CD4-positive, alpha-beta T cell (primary cell): ENCODE measurements at regions of chr5 and their contacts with region 1.

Region 1: DNA sequence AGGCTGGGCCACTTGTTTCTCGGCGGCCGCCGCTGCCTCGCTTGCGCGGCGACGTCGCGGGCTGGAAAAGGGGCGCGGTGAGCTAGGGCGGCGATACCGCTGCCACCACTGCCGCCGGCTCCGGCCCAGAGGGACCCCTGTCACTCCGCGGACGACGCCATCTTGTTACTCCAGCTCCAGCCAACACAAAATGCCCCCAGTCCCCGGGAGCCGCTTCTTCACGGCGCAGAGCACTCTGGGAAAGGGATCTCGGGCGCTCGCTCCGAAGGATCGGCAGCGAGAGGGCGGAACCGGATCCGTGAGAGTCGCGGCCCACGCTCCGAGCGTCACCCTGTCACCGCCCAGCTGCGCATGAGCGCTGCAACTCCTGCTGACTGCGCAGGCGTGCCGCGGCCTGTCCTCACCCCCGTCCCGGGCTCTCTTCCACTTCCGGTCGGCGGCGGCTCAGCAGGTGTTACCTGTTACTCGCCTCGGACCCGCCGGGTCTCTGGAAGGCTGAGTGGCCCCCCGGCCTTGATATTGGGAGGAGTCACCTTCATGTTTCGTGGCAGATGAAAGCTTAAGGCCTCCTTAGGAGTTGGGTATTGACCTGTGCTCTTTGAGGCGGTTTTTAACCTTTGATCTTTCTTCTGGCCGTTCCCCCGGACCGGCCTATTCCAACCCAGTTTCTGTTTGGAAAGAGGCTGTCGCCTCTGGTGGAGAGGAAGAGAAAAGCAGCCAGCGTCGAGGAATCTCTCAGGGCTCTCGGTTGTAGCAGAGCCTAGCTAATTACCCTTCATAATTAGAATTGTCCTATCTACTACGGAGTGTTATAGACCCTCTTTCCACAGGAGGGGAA is at the start of gene CSNK1A1:
- DNase-seq: peak; percentile 97 to 100 (median 99)
- ATAC-seq: peak; percentile 86
- H3K4me3 ChIP-seq: peak within 1 kb of the TSS; percentile 97
- H3K4me3 Mint-ChIP-seq: peak within 1 kb of the TSS; percentile 99
- H3K27ac ChIP-seq: peak within 1 kb of the TSS; percentile 94 to 98
- H3K27ac Mint-ChIP-seq: peak within 1 kb of the TSS; percentile 98
- H3K4me1 ChIP-seq: peaks cover 26% of the 10 kb centered on the region
- H3K4me1 Mint-ChIP-seq: peaks cover 36% of the 10 kb centered on the region
- H3K27me3 ChIP-seq: no peaks in the 10 kb centered on the region
- H3K27me3 Mint-ChIP-seq: no peaks in the 10 kb centered on the region
- CTCF ChIP-seq: peak; percentile 67
- total RNA-seq, gene CSNK1A1: 201 to 217 TPM

Region 2: DNA sequence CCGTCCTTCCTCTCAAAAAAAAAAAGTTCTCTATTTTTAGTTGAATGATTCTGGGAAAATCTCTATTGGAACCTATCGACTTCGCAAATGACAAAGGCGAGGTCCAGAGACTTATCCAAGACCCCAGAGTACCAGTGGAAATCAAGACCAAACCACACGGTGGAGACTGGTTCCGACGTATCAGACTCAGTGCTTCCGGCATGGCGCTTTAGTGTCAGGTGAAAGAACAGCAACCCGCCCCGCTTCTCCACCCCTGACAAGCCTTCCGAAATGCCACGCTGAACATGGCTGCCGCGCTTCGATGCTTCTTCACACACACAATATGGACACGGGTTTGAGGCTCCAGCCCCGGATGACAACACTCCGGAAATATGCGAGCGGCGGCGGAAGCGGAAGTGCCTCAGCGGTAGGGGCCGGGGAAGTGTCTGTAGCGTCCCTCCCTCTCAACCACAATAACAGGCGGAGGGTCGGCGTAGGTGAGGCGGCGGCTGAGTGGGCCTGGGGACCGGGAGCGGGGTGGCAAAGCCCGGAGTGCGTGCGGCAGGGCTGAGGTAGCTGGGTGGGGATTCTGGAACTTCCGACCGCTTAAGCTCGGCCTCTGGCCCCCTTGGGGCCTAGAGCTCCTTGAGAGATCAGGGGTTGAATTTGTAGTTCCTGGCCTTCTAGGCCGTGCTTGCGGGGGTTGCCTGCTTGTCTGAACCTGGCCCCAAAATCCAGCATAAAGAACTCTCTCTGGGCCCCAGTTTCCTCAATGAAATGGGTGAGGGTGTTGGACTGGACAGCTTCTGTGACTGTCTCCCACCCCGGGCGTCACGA is 1167.6 kb before region 1 on chr5 and contains the start of gene FBXO38:
- CTCF ChIA-PET with region 1: no interaction called
- POLR2A ChIA-PET with region 1: interaction called, 3 read pairs
- intact Hi-C with region 1: loop called in 1 of 2 experiments (anchors 10 kb)
- DNase-seq: peak; percentile 93 to 99 (median 97)
- ATAC-seq: peak; percentile 94
- H3K4me3 ChIP-seq: peak within 1 kb of the TSS; percentile 84
- H3K4me3 Mint-ChIP-seq: peak within 1 kb of the TSS; percentile 89
- H3K27ac ChIP-seq: peak within 1 kb of the TSS; percentile 92 to 96
- H3K27ac Mint-ChIP-seq: peak within 1 kb of the TSS; percentile 96
- H3K4me1 ChIP-seq: peaks cover 25% of the 10 kb centered on the region
- H3K4me1 Mint-ChIP-seq: peaks cover 71% of the 10 kb centered on the region
- H3K27me3 ChIP-seq: no peaks in the 10 kb centered on the region
- H3K27me3 Mint-ChIP-seq: no peaks in the 10 kb centered on the region
- CTCF ChIP-seq: no peak
- total RNA-seq, gene FBXO38: 45.7 to 47.3 TPM

Region 3: DNA sequence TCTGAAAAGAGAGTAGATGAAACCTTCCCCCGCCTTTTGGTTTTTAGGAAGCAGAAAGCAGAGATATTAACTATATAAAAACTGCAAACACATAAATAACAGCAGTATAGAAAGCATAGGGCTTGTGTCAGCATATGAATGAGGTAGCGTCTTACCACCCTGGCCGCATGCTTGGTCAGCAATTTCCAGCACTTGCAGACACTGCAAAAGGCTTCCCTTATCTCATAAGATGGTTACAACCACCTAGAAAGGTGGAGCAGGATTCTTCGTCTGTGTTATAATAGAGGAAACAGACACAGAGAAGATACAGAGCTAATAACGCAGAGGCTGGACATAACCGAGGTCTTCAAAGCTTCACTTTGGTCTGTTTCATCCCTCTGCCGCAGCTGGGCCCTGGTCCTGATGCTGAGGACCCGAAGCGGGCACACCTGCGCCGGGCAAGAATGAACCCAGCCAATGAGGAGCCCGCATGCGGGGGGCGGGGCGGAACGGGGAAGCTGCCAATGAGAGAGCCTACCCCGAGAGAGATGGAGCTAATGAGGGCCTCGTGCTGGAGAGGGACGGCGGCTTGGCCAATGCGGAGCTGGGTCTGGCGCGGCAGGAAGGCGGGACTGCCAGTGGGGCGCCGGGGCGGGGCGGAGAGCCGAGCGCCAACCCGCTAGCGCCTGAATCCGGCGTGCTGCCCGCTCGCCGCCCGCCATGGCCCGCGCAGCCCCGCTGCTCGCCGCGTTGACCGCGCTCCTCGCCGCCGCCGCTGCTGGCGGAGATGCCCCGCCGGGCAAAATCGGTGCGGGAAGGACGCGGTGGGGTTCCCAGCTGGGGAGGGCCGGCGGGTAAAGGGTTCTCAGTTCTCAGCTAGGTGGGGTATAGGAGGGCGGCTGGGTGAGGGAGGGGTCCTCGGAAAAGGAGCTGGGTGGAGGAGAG is 193.8 kb before region 1 on chr5 and contains the start of gene PCYOX1L:
- CTCF ChIA-PET with region 1: interaction called, 3 read pairs
- POLR2A ChIA-PET with region 1: interaction called, 22 read pairs
- intact Hi-C with region 1: loop called in 1 of 2 experiments (anchors 5 kb)
- DNase-seq: peak; percentile 85 to 98 (median 96)
- ATAC-seq: peak; percentile 96
- H3K4me3 ChIP-seq: peak within 1 kb of the TSS; percentile 67
- H3K4me3 Mint-ChIP-seq: peak within 1 kb of the TSS; percentile 94
- H3K27ac ChIP-seq: peak within 1 kb of the TSS; percentile 67 to 82
- H3K27ac Mint-ChIP-seq: peak within 1 kb of the TSS; percentile 91
- H3K4me1 ChIP-seq: peaks cover 47% of the 10 kb centered on the region
- H3K4me1 Mint-ChIP-seq: peaks cover 71% of the 10 kb centered on the region
- H3K27me3 ChIP-seq: no peaks in the 10 kb centered on the region
- H3K27me3 Mint-ChIP-seq: no peaks in the 10 kb centered on the region
- CTCF ChIP-seq: no peak
- total RNA-seq, gene PCYOX1L: 22.9 to 24.8 TPM

Region 4: GRCh38 chr5:149497357-149497756 is 54.1 kb before region 1 on chr5:
- CTCF ChIA-PET with region 1: interaction called, 5 read pairs
- POLR2A ChIA-PET with region 1: interaction called, 5 read pairs
- intact Hi-C with region 1: loop called (anchors 5 kb)
- DNase-seq: no peak
- ATAC-seq: no peak
- H3K4me3 ChIP-seq: no peak overlapping the region
- H3K4me3 Mint-ChIP-seq: no peak overlapping the region
- H3K27ac ChIP-seq: no peak overlapping the region
- H3K27ac Mint-ChIP-seq: no peak overlapping the region
- H3K4me1 ChIP-seq: no peaks in the 10 kb centered on the region
- H3K4me1 Mint-ChIP-seq: no peaks in the 10 kb centered on the region
- H3K27me3 ChIP-seq: no peaks in the 10 kb centered on the region
- H3K27me3 Mint-ChIP-seq: no peaks in the 10 kb centered on the region
- CTCF ChIP-seq: no peak

Region 5: GRCh38 chr5:149561848-149562247 is 10.4 kb after region 1 on chr5:
- CTCF ChIA-PET with region 1: interaction called, 10 read pairs
- POLR2A ChIA-PET with region 1: interaction called, 42 read pairs
- intact Hi-C with region 1: no loop called
- DNase-seq: peak in 2 of 14 experiments; percentile 5 to 18
- ATAC-seq: no peak
- H3K4me3 ChIP-seq: no peak overlapping the region
- H3K4me3 Mint-ChIP-seq: no peak overlapping the region
- H3K27ac ChIP-seq: no peak overlapping the region
- H3K27ac Mint-ChIP-seq: no peak overlapping the region
- H3K4me1 ChIP-seq: peaks cover 8% of the 10 kb centered on the region
- H3K4me1 Mint-ChIP-seq: peaks cover 25% of the 10 kb centered on the region
- H3K27me3 ChIP-seq: no peaks in the 10 kb centered on the region
- H3K27me3 Mint-ChIP-seq: no peaks in the 10 kb centered on the region
- CTCF ChIP-seq: no peak

Region 6: DNA sequence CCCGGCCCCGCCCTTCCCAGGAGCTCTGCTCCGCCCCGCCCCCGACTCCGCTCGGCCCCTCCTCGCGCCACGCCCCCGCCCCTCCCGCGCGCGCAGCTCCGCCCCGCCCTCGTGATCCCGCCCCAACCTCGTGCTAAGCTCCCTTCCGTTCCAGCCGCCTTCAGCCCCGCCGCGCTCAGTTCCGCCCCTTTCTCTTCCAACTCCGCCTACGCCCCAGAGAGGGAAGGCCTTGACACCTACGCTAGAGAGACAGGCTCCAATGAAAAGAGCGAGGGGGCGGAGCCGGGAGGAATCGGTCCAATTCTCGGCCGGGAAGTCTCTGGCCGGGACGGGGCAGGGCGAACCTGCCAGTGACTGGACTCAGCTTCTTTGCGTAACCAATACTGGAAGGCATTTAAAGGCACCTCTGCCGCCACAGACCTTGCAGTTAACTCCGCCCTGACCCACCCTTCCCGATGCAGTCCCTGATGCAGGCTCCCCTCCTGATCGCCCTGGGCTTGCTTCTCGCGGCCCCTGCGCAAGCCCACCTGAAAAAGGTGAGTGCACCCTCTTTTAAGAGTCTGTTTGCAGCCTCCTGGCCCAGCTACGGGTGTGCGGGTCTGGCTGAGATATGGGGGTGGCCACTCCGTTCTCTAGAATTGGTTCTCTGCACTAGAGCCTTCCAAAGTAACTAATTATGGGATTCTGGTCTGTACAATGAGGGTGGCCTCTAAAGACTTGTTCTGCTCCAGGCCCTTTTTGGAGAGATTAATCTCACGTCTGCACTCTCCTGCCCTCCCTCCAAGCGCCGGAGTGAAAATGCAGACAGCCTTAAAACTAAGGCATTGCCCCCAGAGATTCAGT is 1701.6 kb after region 1 on chr5 and contains the start of gene GM2A:
- CTCF ChIA-PET with region 1: no interaction called
- POLR2A ChIA-PET with region 1: no interaction called
- intact Hi-C with region 1: loop called in 1 of 2 experiments (anchors 10 kb)
- DNase-seq: peak; percentile 95 to 99 (median 97)
- ATAC-seq: peak; percentile 98
- H3K4me3 ChIP-seq: peak within 1 kb of the TSS; percentile 87
- H3K4me3 Mint-ChIP-seq: peak within 1 kb of the TSS; percentile 88
- H3K27ac ChIP-seq: peak within 1 kb of the TSS; percentile 51 to 68
- H3K27ac Mint-ChIP-seq: peak within 1 kb of the TSS; percentile 92
- H3K4me1 ChIP-seq: peaks cover 42% of the 10 kb centered on the region
- H3K4me1 Mint-ChIP-seq: peaks cover 61% of the 10 kb centered on the region
- H3K27me3 ChIP-seq: no peaks in the 10 kb centered on the region
- H3K27me3 Mint-ChIP-seq: no peaks in the 10 kb centered on the region
- CTCF ChIP-seq: no peak
- total RNA-seq, gene GM2A: 3.1 to 4.1 TPM